Activated CD4-positive, alpha-beta T cell treated with anti-CD3 and anti-CD28 coated beads for 36 hours (primary cell): ENCODE measurements at regions of chr7 and their contacts with region 1.

Region 1: GRCh38 chr7:2477447-2478398 is 1.5 kb upstream of the GRIFIN start:
- DNase-seq: peak; percentile 80
- ATAC-seq: peak; percentile 99
- H3K4me3 Mint-ChIP-seq: no peak overlapping the region
- H3K27ac Mint-ChIP-seq: no peak overlapping the region
- H3K4me1 Mint-ChIP-seq: no peaks in the 10 kb centered on the region
- H3K27me3 Mint-ChIP-seq: no peaks in the 10 kb centered on the region

Region 2: DNA sequence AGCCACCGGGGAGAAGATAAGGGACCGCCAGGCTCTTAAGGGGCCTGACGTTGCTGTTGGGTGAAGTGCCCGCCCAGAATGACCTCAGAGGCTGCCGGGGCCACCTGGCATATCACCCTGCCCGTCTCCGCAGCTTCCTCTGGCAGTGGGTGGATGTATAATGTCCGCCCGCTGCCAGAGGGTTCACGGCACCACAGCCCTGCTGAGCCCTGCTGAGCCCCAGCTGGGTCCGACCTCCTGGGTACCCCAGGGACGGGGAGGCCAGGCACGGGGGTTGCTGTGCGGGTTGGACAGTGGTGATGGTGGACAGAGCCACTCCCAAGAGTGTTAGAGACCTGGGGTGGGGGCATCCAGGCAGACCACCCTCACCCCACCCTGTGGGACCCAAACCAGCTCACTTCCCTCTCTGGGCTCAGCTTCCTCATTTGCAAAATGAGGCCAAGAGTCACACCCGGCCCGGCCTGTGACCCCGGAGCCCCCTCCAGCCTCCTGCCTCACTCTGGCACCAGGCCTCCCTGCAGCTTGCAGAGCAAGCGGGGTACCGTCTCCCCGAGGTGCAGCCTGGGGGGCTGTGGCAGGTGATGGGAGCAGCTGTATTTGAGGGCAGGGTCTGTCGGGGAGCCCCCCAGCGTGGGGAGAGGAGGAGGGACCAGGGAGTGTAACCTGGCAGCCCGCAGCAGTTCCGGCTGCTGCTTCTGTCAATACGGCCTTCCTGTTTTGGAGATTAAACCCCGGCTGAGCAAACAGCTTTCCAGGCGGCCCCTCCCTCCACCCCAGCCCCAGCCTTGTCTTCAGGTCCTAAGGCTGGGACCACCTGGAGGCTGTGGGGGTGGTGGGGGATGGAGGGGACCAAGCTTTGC is 33.4 kb after region 1 on chr7:
- CTCF ChIA-PET with region 1: no interaction called
- POLR2A ChIA-PET with region 1: no interaction called
- intact Hi-C with region 1: loop called in 1 of 2 experiments (anchors 5 kb)
- DNase-seq: peak; percentile 80
- ATAC-seq: peak; percentile 52
- H3K4me3 Mint-ChIP-seq: peak overlapping the region; percentile 46
- H3K27ac Mint-ChIP-seq: peak overlapping the region; percentile 89
- H3K4me1 Mint-ChIP-seq: peaks cover 52% of the 10 kb centered on the region
- H3K27me3 Mint-ChIP-seq: no peaks in the 10 kb centered on the region

Region 3: DNA sequence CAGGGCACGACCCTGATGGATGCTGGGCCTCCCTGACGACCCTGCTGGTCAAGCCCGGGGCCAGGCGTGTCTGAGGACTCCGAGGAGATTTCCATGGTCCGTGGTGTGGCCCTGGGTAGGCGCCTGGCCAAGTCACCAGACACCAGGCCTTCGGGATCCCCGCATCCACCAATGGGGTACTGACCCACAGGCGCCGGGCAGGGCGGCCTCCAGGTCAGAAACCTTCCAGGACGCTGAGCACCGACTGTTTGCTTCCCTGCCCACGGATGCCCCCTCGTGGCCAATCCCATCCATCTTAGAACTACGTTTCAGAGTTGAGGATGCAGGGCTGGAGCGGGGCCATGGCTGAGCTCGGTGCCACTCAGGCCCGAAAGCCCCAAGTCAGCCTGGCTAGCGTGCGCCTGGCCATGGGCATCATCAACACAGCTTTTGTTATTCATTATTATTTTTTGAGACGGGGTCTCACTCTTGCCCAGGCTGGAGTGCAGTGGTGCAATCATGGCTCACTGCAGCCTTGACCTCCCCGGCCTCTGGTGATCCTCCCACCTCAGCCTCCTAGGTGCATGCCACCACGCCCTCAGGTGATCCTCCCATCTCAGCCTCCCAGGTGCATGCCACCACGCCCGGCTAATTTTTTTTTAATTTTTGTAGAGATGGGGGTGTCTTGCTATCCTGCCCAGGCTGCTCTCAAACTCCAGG is 203.2 kb after region 1 on chr7:
- CTCF ChIA-PET with region 1: no interaction called
- POLR2A ChIA-PET with region 1: no interaction called
- intact Hi-C with region 1: loop called in 1 of 2 experiments (anchors 1 kb)
- DNase-seq: peak; percentile 79
- ATAC-seq: peak; percentile 73
- H3K4me3 Mint-ChIP-seq: no peak overlapping the region
- H3K27ac Mint-ChIP-seq: no peak overlapping the region
- H3K4me1 Mint-ChIP-seq: no peaks in the 10 kb centered on the region
- H3K27me3 Mint-ChIP-seq: peaks cover 2% of the 10 kb centered on the region